Activated CD4-positive, alpha-beta T cell treated with anti-CD3 and anti-CD28 coated beads for 36 hours (primary cell): ENCODE measurements at regions of chr22 and their contacts with region 1.

Region 1: DNA sequence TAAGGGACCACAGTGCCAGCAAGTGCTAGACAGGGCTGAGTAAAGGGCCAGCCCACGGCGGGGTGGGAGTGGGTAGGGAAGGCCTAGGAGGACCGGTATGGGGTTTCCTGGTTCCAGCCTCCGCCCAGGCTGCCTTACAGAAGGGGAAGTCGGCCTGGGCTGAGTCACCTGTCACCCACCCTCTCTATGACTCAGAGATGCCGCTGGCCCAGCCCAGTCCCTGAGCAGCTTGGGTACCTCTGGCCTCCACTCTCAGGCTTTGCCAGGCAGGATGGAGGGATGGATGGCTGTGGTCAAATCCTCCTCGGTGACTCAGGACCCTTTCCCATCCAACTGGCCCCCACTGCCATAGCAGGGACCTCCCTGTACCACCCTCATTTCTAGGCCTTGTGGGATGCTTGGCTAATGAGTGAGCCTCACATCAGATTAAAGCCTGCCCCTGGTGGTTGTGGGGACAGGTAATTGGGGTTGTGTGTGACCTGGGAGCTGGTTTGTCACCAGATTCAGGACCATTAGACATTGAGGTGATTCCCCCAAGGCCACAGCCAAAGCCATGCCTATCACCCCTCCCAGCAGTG is 13.9 kb downstream of the SLC35E4 start:
- DNase-seq: peak; percentile 95
- ATAC-seq: peak; percentile 99
- H3K4me3 Mint-ChIP-seq: no peak overlapping the region
- H3K27ac Mint-ChIP-seq: peak overlapping the region; percentile 75
- H3K4me1 Mint-ChIP-seq: peaks cover 32% of the 10 kb centered on the region
- H3K27me3 Mint-ChIP-seq: no peaks in the 10 kb centered on the region

Region 2: GRCh38 chr22:30531651-30532608 is 117.6 kb before region 1 on chr22:
- CTCF ChIA-PET with region 1: no interaction called
- POLR2A ChIA-PET with region 1: no interaction called
- intact Hi-C with region 1: no loop called
- DNase-seq: no peak
- ATAC-seq: no peak
- H3K4me3 Mint-ChIP-seq: no peak overlapping the region
- H3K27ac Mint-ChIP-seq: no peak overlapping the region
- H3K4me1 Mint-ChIP-seq: no peaks in the 10 kb centered on the region
- H3K27me3 Mint-ChIP-seq: peaks cover 2% of the 10 kb centered on the region

Region 3: GRCh38 chr22:30667494-30668385 is 18.2 kb after region 1 on chr22 and contains the start of gene DUSP18:
- CTCF ChIA-PET with region 1: interaction called, 8 read pairs
- POLR2A ChIA-PET with region 1: interaction called, 3 read pairs
- intact Hi-C with region 1: loop called (anchors 1 kb)
- DNase-seq: peak; percentile 96
- ATAC-seq: peak; percentile 94
- H3K4me3 Mint-ChIP-seq: peak within 1 kb of the TSS; percentile 92
- H3K27ac Mint-ChIP-seq: peak within 1 kb of the TSS; percentile 69
- H3K4me1 Mint-ChIP-seq: peaks cover 19% of the 10 kb centered on the region
- H3K27me3 Mint-ChIP-seq: peaks cover 3% of the 10 kb centered on the region
- total RNA-seq, gene DUSP18: 7.8 to 8.5 TPM

Region 4: GRCh38 chr22:30742291-30743256 is 93.1 kb after region 1 on chr22:
- CTCF ChIA-PET with region 1: no interaction called
- POLR2A ChIA-PET with region 1: no interaction called
- intact Hi-C with region 1: loop called (anchors 1 kb)
- DNase-seq: peak; percentile 69
- ATAC-seq: peak; percentile 61
- H3K4me3 Mint-ChIP-seq: peak overlapping the region; percentile 6
- H3K27ac Mint-ChIP-seq: peak overlapping the region; percentile 82
- H3K4me1 Mint-ChIP-seq: peaks cover 64% of the 10 kb centered on the region
- H3K27me3 Mint-ChIP-seq: peaks cover 7% of the 10 kb centered on the region

Region 5: GRCh38 chr22:31496007-31496734 is 846.7 kb after region 1 on chr22 and contains the start of gene SFI1:
- CTCF ChIA-PET with region 1: no interaction called
- POLR2A ChIA-PET with region 1: no interaction called
- intact Hi-C with region 1: loop called in 1 of 2 experiments (anchors 1 kb)
- DNase-seq: peak; percentile 97
- ATAC-seq: peak; percentile 87
- H3K4me3 Mint-ChIP-seq: peak within 1 kb of the TSS; percentile 85
- H3K27ac Mint-ChIP-seq: peak within 1 kb of the TSS; percentile 93
- H3K4me1 Mint-ChIP-seq: peaks cover 55% of the 10 kb centered on the region
- H3K27me3 Mint-ChIP-seq: no peaks in the 10 kb centered on the region
- total RNA-seq, gene SFI1: 221 to 234 TPM